T-cell (primary cell): ENCODE measurements at regions of chr15 and their contacts with region 1.

Region 1: GRCh38 chr15:74793135-74794028 is 11.5 kb downstream of the CSK start:
- DNase-seq: peak in 34 of 35 experiments; percentile 54 to 86 (median 74)
- ATAC-seq: peak; percentile 39 to 57 (median 50)
- H3K4me3 ChIP-seq: peak overlapping the region; percentile 20 to 42
- H3K4me3 Mint-ChIP-seq: peak overlapping the region; percentile 28 to 84 (median 57)
- H3K27ac ChIP-seq: peak overlapping the region; percentile 93
- H3K27ac Mint-ChIP-seq: peak overlapping the region; percentile 99 to 100
- H3K4me1 ChIP-seq: peaks cover 76 to 96% of the 10 kb centered on the region in 2 experiments
- H3K4me1 Mint-ChIP-seq: peaks cover 89 to 94% (median 91%) of the 10 kb centered on the region in 3 donors
- H3K27me3 ChIP-seq: no peaks in the 10 kb centered on the region
- H3K27me3 Mint-ChIP-seq: no peaks in the 10 kb centered on the region

Region 2: DNA sequence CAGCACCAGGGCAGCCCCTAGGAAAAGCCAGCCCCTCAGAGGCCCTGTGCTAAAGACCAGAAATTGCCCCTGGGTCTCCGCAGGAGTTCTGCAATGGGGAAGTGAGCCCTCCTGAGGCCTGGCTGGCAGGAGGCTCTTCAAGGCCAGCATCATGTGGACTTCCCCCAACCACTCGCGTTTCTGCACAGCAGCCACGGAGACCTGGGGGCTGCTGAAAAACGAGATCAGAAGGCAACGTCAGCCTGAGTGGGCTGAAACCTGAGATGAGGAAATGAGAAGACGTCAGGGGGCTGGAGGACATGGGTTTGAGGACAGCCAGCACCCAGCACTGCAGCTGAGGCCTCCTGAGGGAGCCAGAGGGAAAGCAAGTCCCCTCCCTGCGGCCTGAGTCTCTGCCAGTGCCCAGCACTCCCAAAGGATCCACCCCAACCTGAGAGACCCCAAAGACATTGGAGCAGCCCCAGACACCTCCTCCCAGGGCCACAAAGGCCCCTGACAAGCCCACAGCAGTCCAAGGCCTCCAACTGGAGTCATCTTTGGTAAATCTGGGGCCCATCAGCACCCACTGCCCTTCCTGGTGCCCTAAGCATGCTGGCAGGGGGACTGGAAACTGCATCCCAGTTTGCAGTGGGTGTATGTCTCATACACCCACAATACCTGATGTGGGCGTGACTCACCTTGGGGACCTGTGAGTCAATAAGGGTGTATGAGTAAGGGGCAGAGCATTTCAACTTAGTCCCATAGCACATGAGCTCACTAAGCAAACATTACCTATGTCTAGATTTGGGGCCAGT is 396.7 kb before region 1 on chr15:
- CTCF ChIA-PET with region 1: no interaction called
- POLR2A ChIA-PET with region 1: no interaction called
- DNase-seq: peak in 8 of 35 experiments; percentile 6 to 52 (median 28)
- ATAC-seq: peak in 2 of 4 experiments; percentile 26 to 69
- H3K4me3 ChIP-seq: no peak overlapping the region
- H3K4me3 Mint-ChIP-seq: peak overlapping the region in 1 of 3 donors; percentile 16
- H3K27ac ChIP-seq: peak overlapping the region; percentile 23
- H3K27ac Mint-ChIP-seq: peak overlapping the region; percentile 59 to 69
- H3K4me1 ChIP-seq: peaks cover 20 to 54% of the 10 kb centered on the region in 2 experiments
- H3K4me1 Mint-ChIP-seq: peaks cover 39 to 54% (median 42%) of the 10 kb centered on the region in 3 donors
- H3K27me3 ChIP-seq: peaks cover 0 to 5% of the 10 kb centered on the region in 2 experiments
- H3K27me3 Mint-ChIP-seq: no peaks in the 10 kb centered on the region

Region 3: DNA sequence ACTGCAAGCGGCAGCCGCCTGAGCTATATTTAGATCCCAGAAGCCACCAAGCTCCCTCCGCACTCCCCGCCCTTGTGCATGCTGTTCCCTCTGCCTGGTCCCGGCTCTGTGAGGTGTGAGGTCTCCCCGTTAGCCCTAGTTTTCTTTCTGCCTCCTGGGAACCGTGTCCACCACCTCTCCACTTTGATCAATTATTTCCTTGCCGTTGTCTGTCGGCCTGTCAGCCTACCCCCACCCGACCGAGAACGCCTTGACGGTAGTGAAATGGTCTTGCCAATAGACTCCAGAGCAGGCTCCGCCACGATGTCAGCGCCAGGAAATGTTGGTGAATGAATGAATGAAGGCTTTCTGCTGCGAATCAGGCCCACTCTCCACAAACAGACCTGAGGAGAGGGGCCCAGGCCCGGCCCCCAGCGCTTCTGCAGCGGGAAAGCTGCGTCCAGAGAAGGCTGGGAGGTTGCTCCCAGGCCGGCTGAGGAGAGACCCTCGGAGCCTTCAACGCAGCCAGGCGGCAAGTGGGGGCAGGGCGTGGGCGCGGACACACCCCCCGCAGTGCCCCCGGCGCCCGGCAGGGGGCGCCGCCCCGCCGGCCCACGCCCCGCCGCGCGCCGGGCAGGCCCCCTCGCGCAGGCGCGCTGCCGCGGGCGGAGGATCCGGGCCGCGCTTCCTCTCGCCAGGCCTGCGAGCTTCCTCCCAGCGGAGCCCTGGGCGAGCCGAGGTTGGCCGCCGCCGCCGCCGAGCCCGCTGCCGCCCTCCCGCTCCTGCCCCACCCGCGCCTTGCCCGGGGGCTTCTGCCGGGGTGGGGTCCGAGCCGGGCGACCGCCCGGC is 11.7 kb before region 1 on chr15 and contains the start of gene CSK:
- CTCF ChIA-PET with region 1: interaction called, 16 to 158 read pairs
- POLR2A ChIA-PET with region 1: interaction called, 3 to 15 read pairs
- DNase-seq: peak; percentile 53 to 92 (median 72)
- ATAC-seq: peak; percentile 66 to 76 (median 68)
- H3K4me3 ChIP-seq: peak within 1 kb of the TSS; percentile 90 to 95
- H3K4me3 Mint-ChIP-seq: peak within 1 kb of the TSS; percentile 93 to 97 (median 93)
- H3K27ac ChIP-seq: peak within 1 kb of the TSS; percentile 97
- H3K27ac Mint-ChIP-seq: peak within 1 kb of the TSS; percentile 99
- H3K4me1 ChIP-seq: peaks cover 50 to 89% of the 10 kb centered on the region in 2 experiments
- H3K4me1 Mint-ChIP-seq: peaks cover 78 to 83% (median 80%) of the 10 kb centered on the region in 3 donors
- H3K27me3 ChIP-seq: no peaks in the 10 kb centered on the region
- H3K27me3 Mint-ChIP-seq: no peaks in the 10 kb centered on the region
- total RNA-seq, gene CSK: 198 to 296 (median 271) TPM

Region 4: DNA sequence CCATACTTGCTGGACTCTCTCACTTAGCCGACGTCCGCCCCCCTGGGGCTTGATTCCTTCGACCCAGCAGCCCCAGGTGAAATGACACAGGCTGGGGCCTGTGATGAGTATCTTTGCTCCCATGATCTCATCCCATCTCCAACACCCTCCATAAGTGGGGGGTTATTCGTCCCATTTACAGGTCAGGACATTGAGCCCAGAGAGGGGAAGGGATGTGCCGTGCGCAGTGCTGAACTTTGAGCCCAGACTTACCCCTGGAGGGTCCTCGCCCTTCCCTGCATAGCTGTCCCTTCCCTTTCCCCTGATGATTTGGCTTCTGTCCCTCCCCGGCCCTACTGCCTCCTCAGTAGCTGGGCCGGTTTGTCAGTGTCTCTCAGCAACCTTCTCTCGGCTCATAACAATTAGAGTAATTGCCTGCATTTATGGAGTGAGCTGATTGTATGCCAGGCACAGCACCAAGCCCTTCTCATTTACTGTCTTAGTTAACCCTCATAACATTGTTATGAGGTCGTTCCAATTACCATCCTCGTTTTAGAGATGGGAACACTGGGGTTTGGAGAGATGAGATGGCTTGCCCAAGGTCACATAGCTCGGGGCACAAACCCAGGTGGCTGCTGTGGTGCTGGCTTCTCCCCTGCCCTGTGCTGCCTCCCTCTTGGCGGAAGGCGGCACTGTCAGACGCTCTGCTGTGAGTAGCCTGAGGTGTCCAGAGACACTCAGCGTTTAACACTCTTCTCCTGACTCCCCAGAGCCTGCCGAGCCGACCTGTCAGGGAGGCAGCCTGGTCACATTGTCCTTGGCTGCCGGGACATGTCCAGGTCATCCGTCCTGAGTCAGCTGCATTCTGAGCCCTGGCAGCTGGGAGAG is 23.7 kb after region 1 on chr15:
- CTCF ChIA-PET with region 1: no interaction called
- POLR2A ChIA-PET with region 1: no interaction called
- DNase-seq: no peak
- ATAC-seq: no peak
- H3K4me3 ChIP-seq: no peak overlapping the region
- H3K4me3 Mint-ChIP-seq: no peak overlapping the region
- H3K27ac ChIP-seq: no peak overlapping the region
- H3K27ac Mint-ChIP-seq: no peak overlapping the region
- H3K4me1 ChIP-seq: peaks cover 0 to 13% of the 10 kb centered on the region in 2 experiments
- H3K4me1 Mint-ChIP-seq: peaks cover 0 to 13% (median 8%) of the 10 kb centered on the region in 3 donors
- H3K27me3 ChIP-seq: peaks cover 0 to 41% of the 10 kb centered on the region in 2 experiments
- H3K27me3 Mint-ChIP-seq: peaks cover 0 to 2% of the 10 kb centered on the region in 2 donors